Heart right ventricle (tissue), 16 donors: ENCODE measurements at regions of chr2 and their contacts with region 1.

Region 1: DNA sequence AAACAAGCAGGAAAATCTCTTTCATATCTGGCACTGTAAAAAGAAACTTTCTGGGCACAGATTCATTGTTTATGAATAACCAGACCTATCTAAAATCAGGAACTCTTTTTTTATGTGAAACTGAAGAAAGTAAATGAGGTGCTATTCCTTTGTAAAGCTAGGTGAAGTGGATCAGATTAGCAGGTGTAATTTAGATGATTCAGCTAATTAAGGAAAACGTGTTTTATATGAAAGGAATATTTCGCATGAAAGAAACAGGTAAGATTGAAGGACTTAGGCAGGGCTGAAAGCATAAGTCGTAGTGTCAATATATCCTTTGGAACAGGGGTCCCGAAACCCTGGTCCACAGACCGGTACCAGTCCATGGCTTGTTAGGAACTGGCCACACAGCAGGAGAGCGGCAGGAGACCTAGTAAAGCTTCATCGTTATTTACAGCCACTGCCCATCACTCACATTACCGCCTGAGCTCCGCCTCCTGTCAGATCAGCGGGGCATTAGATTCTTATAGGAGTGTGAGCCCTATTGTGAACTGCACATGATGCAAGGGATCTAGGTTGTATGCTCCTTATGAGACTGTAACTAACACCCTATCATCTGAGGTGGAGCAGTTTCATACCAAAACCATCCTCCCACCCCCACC is 20.3 kb upstream of the XIRP2 start:
- DNase-seq: no peak
- ATAC-seq: no peak
- H3K4me3 ChIP-seq: no peak overlapping the region
- H3K27ac ChIP-seq: no peak overlapping the region
- H3K4me1 ChIP-seq: no peaks in the 10 kb centered on the region
- H3K27me3 ChIP-seq: no peaks in the 10 kb centered on the region
- CTCF ChIP-seq: no peak

Region 2: GRCh38 chr2:166803373-166804000 is 64.5 kb before region 1 on chr2:
- intact Hi-C with region 1: no loop called
- DNase-seq: no peak
- ATAC-seq: peak in 1 of 8 donors; percentile 49
- H3K4me3 ChIP-seq: no peak overlapping the region
- H3K27ac ChIP-seq: no peak overlapping the region
- H3K4me1 ChIP-seq: peaks cover 0 to 6% (median 0%) of the 10 kb centered on the region in 9 donors
- H3K27me3 ChIP-seq: no peaks in the 10 kb centered on the region
- CTCF ChIP-seq: no peak

Region 3: GRCh38 chr2:166831930-166832329 is 36.1 kb before region 1 on chr2:
- intact Hi-C with region 1: loop called in 1 of 10 experiments (anchors 1 kb)
- DNase-seq: no peak
- ATAC-seq: no peak
- H3K4me3 ChIP-seq: no peak overlapping the region
- H3K27ac ChIP-seq: no peak overlapping the region
- H3K4me1 ChIP-seq: no peaks in the 10 kb centered on the region
- H3K27me3 ChIP-seq: no peaks in the 10 kb centered on the region
- CTCF ChIP-seq: no peak

Region 4: DNA sequence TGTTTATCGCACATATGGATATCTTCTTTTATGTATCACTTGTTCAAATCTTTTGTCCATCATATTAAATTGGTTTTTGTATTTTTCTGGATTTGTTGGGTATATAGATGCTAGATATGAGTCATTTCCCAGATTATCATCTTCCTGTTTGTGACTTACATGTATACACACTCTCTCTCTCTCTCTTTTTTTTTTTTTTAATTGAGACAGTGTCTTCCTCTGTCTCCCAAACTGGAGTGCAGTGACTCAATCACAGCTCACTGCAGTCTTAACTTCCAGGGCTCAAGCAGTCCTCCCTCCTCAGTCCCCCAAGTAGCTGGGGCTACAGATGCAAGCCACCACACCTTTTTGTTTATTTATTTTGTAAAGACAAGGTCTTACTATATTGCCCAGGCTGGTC is 64.0 kb after region 1 on chr2:
- intact Hi-C with region 1: no loop called
- DNase-seq: no peak
- ATAC-seq: no peak
- H3K4me3 ChIP-seq: no peak overlapping the region
- H3K27ac ChIP-seq: no peak overlapping the region
- H3K4me1 ChIP-seq: no peaks in the 10 kb centered on the region
- H3K27me3 ChIP-seq: no peaks in the 10 kb centered on the region
- CTCF ChIP-seq: no peak